Activated naive CD4-positive, alpha-beta T cell treated with anti-CD3 and anti-CD28 coated beads for 36 hours (primary cell): ENCODE measurements at regions of chr16 and their contacts with region 1.

Region 1: DNA sequence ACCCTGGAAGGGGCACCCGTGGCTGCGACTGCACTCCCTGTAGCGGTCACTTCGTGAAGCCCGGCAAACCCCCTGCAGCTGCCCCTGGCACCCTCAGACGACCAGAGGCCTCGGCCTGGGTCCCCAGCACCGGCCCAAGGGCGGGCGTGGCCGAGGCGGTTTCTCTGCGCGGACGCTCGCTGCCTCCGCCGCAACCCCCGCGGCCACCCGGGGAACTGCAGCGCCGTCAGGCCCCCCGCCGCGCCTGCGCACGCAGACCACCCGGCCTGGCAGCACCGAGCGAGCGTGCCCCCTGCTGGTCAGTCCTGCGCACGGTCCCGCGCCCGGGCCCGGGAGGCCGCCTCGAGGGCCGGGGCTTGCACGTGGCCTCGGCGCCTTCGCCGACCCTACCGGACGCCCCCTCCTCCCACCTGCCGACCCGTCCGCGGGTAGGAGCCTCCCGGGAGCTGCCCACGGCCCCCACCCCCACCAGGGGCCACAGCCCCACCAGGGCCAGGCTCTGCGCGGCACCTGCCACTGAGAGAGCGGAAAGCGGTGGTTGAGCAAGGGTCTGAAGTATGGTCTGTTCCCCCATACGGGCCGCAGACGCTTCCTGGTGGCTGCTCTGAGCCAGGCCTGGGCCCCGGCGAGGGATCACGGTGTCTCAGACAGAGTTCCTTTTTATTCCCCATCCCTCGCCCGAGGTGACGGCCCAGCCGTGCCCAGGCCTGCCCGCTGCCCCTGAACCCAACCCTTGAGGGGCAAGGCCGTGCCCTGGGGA is 11.5 kb upstream of the HS3ST6 start:
- DNase-seq: peak; percentile 91
- H3K4me3 Mint-ChIP-seq: peak overlapping the region; percentile 61
- H3K27ac Mint-ChIP-seq: no peak overlapping the region
- H3K4me1 Mint-ChIP-seq: no peaks in the 10 kb centered on the region
- H3K27me3 Mint-ChIP-seq: no peaks in the 10 kb centered on the region

Region 2: GRCh38 chr16:1481906-1482835 is 447.6 kb before region 1 on chr16:
- CTCF ChIA-PET with region 1: no interaction called
- intact Hi-C with region 1: no loop called
- DNase-seq: no peak
- H3K4me3 Mint-ChIP-seq: no peak overlapping the region
- H3K27ac Mint-ChIP-seq: no peak overlapping the region
- H3K4me1 Mint-ChIP-seq: no peaks in the 10 kb centered on the region
- H3K27me3 Mint-ChIP-seq: no peaks in the 10 kb centered on the region

Region 3: GRCh38 chr16:1772736-1773584 is 156.8 kb before region 1 on chr16 and contains the starts of genes EME2 and MRPS34:
- CTCF ChIA-PET with region 1: no interaction called
- intact Hi-C with region 1: loop called (anchors 1 kb)
- DNase-seq: peak; percentile 85
- H3K4me3 Mint-ChIP-seq: peak within 1 kb of the TSS; percentile 93
- H3K27ac Mint-ChIP-seq: peak within 1 kb of the TSS; percentile 93
- H3K4me1 Mint-ChIP-seq: peaks cover 7% of the 10 kb centered on the region
- H3K27me3 Mint-ChIP-seq: no peaks in the 10 kb centered on the region
- total RNA-seq, gene EME2: 7.7 to 7.8 TPM
- total RNA-seq, gene MRPS34: 122 to 138 TPM

Region 4: GRCh38 chr16:1812732-1813163 is 117.0 kb before region 1 on chr16:
- CTCF ChIA-PET with region 1: interaction called, 14 read pairs
- intact Hi-C with region 1: loop called (anchors 1 kb)
- DNase-seq: peak; percentile 80
- H3K4me3 Mint-ChIP-seq: no peak overlapping the region
- H3K27ac Mint-ChIP-seq: no peak overlapping the region
- H3K4me1 Mint-ChIP-seq: peaks cover 10% of the 10 kb centered on the region
- H3K27me3 Mint-ChIP-seq: no peaks in the 10 kb centered on the region